Calu3 (cell line): ENCODE measurements at regions of chrX and their contacts with region 1.

Region 1: DNA sequence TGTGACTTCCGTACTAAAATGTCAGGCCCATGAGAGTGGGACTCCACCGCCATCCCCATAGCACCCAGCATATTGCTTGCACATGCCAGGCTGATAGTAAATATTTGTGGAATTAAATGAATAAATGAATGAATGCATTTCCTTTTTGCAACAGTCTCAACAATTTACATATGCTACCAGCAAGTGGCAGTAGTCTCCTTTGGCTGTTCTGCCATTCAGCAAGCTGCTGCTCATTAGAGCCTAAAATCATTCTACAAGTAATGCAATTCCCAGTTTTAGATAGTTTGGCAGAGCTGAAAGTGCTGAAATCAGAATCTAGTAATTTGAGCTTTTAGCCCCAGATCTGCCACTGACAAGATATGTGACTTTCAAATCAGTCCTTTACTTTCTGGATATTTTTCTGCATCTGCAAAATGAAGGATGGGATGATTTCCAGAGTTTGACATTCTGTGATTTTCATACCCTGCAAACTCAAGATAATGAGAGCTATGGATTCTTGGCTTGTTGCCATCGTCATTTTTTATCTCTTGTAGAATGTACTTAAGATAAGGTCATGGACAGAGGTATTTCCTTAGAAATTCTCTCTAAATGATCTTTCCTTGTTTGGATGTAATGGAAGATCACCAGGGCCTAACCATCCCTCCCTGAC is 35.7 kb upstream of the INTS6L start:
- DNase-seq: peak; percentile 22
- H3K4me3 Mint-ChIP-seq: no peak overlapping the region
- H3K27ac Mint-ChIP-seq: no peak overlapping the region
- H3K4me1 Mint-ChIP-seq: no peaks in the 10 kb centered on the region
- H3K27me3 Mint-ChIP-seq: peaks cover 12% of the 10 kb centered on the region
- CTCF ChIP-seq: no peak

Region 2: GRCh38 chrX:135572436-135572835 is 87.7 kb after region 1 on chrX:
- CTCF ChIA-PET with region 1: no interaction called
- intact Hi-C with region 1: loop called (anchors 1 kb)
- DNase-seq: no peak
- H3K4me3 Mint-ChIP-seq: no peak overlapping the region
- H3K27ac Mint-ChIP-seq: no peak overlapping the region
- H3K4me1 Mint-ChIP-seq: no peaks in the 10 kb centered on the region
- H3K27me3 Mint-ChIP-seq: no peaks in the 10 kb centered on the region
- CTCF ChIP-seq: no peak

Region 3: DNA sequence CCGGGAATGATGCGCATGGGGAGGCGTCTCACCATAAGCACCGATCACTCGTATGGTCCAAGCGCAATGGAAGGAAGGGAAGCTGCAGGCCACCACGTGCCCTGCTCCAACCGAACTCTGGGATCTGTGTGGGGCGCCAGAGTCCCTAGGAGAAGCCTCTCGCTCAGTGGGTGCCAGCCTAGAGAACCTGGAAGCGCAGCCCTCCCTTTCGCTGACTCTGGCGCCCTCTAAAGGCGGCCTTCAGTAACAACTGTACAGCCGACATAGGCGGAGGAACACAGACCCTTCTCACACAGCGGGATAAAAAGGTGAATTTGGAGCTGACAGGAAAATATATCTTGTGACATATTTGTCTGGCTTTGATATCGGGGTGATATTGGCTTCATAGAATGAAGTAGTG is 111.7 kb after region 1 on chrX:
- CTCF ChIA-PET with region 1: no interaction called
- intact Hi-C with region 1: loop called (anchors 5 kb)
- DNase-seq: peak; percentile 20
- H3K4me3 Mint-ChIP-seq: no peak overlapping the region
- H3K27ac Mint-ChIP-seq: no peak overlapping the region
- H3K4me1 Mint-ChIP-seq: no peaks in the 10 kb centered on the region
- H3K27me3 Mint-ChIP-seq: no peaks in the 10 kb centered on the region
- CTCF ChIP-seq: no peak

Region 4: GRCh38 chrX:135931644-135932487 is 447.1 kb after region 1 on chrX:
- CTCF ChIA-PET with region 1: no interaction called
- intact Hi-C with region 1: loop called (anchors 10 kb)
- DNase-seq: peak; percentile 59
- H3K4me3 Mint-ChIP-seq: no peak overlapping the region
- H3K27ac Mint-ChIP-seq: no peak overlapping the region
- H3K4me1 Mint-ChIP-seq: no peaks in the 10 kb centered on the region
- H3K27me3 Mint-ChIP-seq: peaks cover 41% of the 10 kb centered on the region
- CTCF ChIP-seq: peak; percentile 36